Colonic mucosa (tissue), 4 donors: ENCODE measurements at regions of chr19 and their contacts with region 1.

Region 1: GRCh38 chr19:1767464-1767933 is 14.2 kb downstream of the ONECUT3 start:
- DNase-seq: peak; percentile 47
- H3K4me3 ChIP-seq: no peak overlapping the region
- H3K27ac ChIP-seq: no peak overlapping the region
- H3K4me1 ChIP-seq: no peaks in the 10 kb centered on the region
- H3K27me3 ChIP-seq: peaks cover 54% of the 10 kb centered on the region
- CTCF ChIP-seq: peak; percentile 88

Region 2: GRCh38 chr19:1551068-1552040 is 216.1 kb before region 1 on chr19:
- intact Hi-C with region 1: loop called (anchors 2 kb)
- DNase-seq: no peak
- H3K4me3 ChIP-seq: no peak overlapping the region
- H3K27ac ChIP-seq: no peak overlapping the region
- H3K4me1 ChIP-seq: no peaks in the 10 kb centered on the region
- H3K27me3 ChIP-seq: no peaks in the 10 kb centered on the region
- CTCF ChIP-seq: no peak